ENCODE measurements at regions of chr14 and their contacts with region 1.

Region 1: DNA sequence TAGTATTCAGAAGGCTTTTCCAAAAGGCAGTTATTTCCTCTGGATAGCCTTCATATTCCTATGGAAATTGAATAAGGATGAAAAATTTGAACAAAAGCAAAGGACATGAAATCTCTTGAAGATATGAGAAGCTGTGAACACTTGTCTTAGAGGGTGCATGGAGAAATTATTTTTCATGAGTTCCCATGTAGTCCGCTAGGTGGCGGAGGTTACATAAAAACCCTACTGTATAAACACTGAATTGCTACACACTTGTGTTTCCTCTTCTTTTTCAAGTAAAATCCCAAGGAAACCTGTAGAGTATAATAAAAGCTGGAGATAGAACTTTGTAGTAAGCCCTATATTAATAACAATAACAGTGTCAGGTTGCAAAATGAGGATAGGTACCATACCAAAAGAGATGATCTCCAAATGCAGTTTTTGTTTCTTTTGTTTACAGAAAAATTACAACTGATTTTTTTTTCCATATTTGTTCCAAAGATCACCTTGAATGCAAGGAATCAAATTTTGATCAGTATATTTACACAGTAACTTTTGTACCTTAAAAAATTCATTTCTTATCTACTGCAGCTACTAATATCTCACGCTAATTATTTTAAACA is 37.8 kb upstream of the OR4E1 start:
- DNase-seq: peak; percentile 50
- ATAC-seq: peak; percentile 69
- H3K4me3 Mint-ChIP-seq: no peak overlapping the region
- H3K27ac Mint-ChIP-seq: peak overlapping the region; percentile 64
- H3K4me1 Mint-ChIP-seq: peaks cover 7% of the 10 kb centered on the region
- H3K27me3 Mint-ChIP-seq: peaks cover 10% of the 10 kb centered on the region

Region 2: GRCh38 chr14:21699551-21699950 is 11.9 kb before region 1 on chr14:
- CTCF ChIA-PET with region 1: interaction called, 23 read pairs
- POLR2A ChIA-PET with region 1: no interaction called
- DNase-seq: no peak
- ATAC-seq: no peak
- H3K4me3 Mint-ChIP-seq: no peak overlapping the region
- H3K27ac Mint-ChIP-seq: no peak overlapping the region
- H3K4me1 Mint-ChIP-seq: peaks cover 10% of the 10 kb centered on the region
- H3K27me3 Mint-ChIP-seq: peaks cover 14% of the 10 kb centered on the region

Region 3: DNA sequence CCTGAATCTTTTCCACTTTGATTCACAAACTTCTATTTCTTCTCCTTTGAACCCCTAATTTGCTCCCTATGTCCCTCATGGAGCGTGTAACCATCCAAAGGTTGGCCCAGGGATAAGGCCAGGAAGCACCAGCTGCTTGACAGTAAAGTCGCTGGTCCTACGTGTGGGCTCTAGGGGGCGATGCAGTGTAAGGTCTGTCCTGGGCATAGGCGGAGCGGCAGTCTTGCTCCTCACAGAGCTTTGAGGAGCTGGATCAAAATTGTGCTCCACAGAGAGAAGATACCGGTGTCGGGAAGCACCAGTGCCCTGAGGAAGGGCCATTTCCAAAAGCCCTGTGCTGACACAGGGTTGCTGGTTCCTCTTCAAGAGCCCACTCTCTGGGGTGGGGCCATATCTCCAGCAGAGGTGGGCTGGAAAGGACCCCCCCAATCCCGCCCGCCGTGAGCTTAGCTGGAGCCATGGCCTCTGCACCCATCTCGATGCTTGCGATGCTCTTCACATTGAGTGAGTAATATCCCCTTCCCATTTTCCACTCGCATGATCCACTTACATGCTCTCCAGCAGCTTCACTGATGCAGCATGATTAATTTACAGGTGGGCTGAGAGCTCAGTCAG is 12.1 kb after region 1 on chr14:
- CTCF ChIA-PET with region 1: interaction called, 61 read pairs
- POLR2A ChIA-PET with region 1: interaction called, 7 read pairs
- DNase-seq: peak; percentile 63
- ATAC-seq: peak; percentile 90
- H3K4me3 Mint-ChIP-seq: peak overlapping the region; percentile 72
- H3K27ac Mint-ChIP-seq: peak overlapping the region; percentile 75
- H3K4me1 Mint-ChIP-seq: no peaks in the 10 kb centered on the region
- H3K27me3 Mint-ChIP-seq: peaks cover 29% of the 10 kb centered on the region

Region 4: GRCh38 chr14:21734457-21735074 is 23.1 kb after region 1 on chr14:
- CTCF ChIA-PET with region 1: interaction called, 13 read pairs
- POLR2A ChIA-PET with region 1: no interaction called
- DNase-seq: peak; percentile 68
- ATAC-seq: peak; percentile 41
- H3K4me3 Mint-ChIP-seq: peak overlapping the region; percentile 64
- H3K27ac Mint-ChIP-seq: no peak overlapping the region
- H3K4me1 Mint-ChIP-seq: peaks cover 13% of the 10 kb centered on the region
- H3K27me3 Mint-ChIP-seq: peaks cover 25% of the 10 kb centered on the region

Region 5: GRCh38 chr14:21748869-21749303 is 37.4 kb after region 1 on chr14:
- CTCF ChIA-PET with region 1: interaction called, 17 read pairs
- POLR2A ChIA-PET with region 1: no interaction called
- DNase-seq: peak; percentile 68
- ATAC-seq: peak; percentile 90
- H3K4me3 Mint-ChIP-seq: peak overlapping the region; percentile 51
- H3K27ac Mint-ChIP-seq: peak overlapping the region; percentile 64
- H3K4me1 Mint-ChIP-seq: peaks cover 8% of the 10 kb centered on the region
- H3K27me3 Mint-ChIP-seq: peaks cover 18% of the 10 kb centered on the region